Activated naive CD4-positive, alpha-beta T cell treated with anti-CD3 and anti-CD28 coated beads for 36 hours (primary cell): ENCODE measurements at regions of chr12 and their contacts with region 1.

Region 1: DNA sequence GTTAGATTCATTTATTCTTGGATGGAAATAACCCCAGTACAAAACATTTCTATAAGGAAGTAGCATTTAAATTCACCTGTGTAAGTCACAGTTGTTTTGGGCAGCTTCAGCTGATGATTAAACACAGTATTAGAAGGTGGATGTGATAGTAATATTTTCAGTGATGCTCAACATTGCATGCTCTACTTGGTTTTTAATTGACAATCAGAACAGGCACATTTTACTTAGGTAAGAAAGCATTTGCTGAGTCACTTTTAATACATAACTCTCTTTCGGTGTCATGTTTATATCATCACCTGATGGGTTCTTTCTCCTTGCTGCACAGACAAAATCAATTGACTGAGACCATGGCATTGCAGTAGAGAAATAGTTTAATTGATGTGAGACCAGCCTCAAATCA is 80.7 kb downstream of the CMAS start:
- DNase-seq: no peak
- H3K4me3 Mint-ChIP-seq: no peak overlapping the region
- H3K27ac Mint-ChIP-seq: no peak overlapping the region
- H3K4me1 Mint-ChIP-seq: peaks cover 11% of the 10 kb centered on the region
- H3K27me3 Mint-ChIP-seq: no peaks in the 10 kb centered on the region

Region 2: DNA sequence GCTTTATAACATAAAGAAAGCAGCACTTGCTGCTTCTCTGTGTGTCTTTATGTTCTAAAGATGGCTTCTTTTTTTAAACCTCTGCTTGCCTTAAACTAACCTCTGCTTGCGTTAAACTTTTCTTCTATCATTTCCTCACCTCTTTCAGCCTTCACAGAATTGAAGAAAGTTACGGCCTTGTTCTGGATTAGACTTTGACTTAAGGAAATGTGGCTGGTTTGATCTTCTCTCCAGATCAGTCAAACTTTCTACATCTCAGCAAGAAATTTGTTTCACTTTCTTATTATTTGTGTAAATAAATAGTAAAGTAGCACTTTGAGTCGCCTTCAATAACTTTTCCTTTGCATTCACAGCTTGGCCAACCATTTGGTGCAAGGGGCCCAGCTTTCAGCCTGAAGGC is 16.6 kb before region 1 on chr12:
- CTCF ChIA-PET with region 1: interaction called, 4 read pairs
- intact Hi-C with region 1: loop called (anchors 2 kb)
- DNase-seq: peak; percentile 43
- H3K4me3 Mint-ChIP-seq: no peak overlapping the region
- H3K27ac Mint-ChIP-seq: peak overlapping the region; percentile 58
- H3K4me1 Mint-ChIP-seq: peaks cover 23% of the 10 kb centered on the region
- H3K27me3 Mint-ChIP-seq: no peaks in the 10 kb centered on the region

Region 3: GRCh38 chr12:22164139-22164538 is 37.4 kb after region 1 on chr12:
- CTCF ChIA-PET with region 1: no interaction called
- intact Hi-C with region 1: loop called (anchors 1 kb)
- DNase-seq: peak; percentile 21
- H3K4me3 Mint-ChIP-seq: peak overlapping the region; percentile 3
- H3K27ac Mint-ChIP-seq: peak overlapping the region; percentile 1
- H3K4me1 Mint-ChIP-seq: peaks cover 40% of the 10 kb centered on the region
- H3K27me3 Mint-ChIP-seq: no peaks in the 10 kb centered on the region

Region 4: DNA sequence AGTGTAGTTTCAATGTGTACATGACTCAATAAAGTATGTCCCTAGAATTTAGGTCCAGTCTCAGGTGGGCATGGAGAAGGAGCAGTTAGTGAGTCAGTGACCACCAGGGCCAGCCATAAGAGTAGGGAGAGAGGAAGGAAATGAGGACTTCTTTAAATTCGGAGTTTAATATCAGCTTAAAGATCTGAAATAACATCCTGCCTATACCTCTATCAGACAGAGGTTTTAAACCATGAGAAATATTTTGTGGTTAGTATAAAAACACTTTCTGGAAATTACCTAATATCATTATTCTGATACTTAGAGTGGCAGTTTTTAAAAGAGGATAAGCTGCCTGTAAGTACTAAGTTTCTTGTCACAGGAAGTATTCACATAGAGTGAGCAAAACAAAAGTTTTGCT is 269.5 kb after region 1 on chr12:
- CTCF ChIA-PET with region 1: no interaction called
- intact Hi-C with region 1: loop called (anchors 1 kb)
- DNase-seq: peak; percentile 24
- H3K4me3 Mint-ChIP-seq: no peak overlapping the region
- H3K27ac Mint-ChIP-seq: peak overlapping the region; percentile 80
- H3K4me1 Mint-ChIP-seq: peaks cover 39% of the 10 kb centered on the region
- H3K27me3 Mint-ChIP-seq: no peaks in the 10 kb centered on the region